HepG2 (cell line): ENCODE measurements at regions of chr11 and their contacts with region 1.

Region 1: DNA sequence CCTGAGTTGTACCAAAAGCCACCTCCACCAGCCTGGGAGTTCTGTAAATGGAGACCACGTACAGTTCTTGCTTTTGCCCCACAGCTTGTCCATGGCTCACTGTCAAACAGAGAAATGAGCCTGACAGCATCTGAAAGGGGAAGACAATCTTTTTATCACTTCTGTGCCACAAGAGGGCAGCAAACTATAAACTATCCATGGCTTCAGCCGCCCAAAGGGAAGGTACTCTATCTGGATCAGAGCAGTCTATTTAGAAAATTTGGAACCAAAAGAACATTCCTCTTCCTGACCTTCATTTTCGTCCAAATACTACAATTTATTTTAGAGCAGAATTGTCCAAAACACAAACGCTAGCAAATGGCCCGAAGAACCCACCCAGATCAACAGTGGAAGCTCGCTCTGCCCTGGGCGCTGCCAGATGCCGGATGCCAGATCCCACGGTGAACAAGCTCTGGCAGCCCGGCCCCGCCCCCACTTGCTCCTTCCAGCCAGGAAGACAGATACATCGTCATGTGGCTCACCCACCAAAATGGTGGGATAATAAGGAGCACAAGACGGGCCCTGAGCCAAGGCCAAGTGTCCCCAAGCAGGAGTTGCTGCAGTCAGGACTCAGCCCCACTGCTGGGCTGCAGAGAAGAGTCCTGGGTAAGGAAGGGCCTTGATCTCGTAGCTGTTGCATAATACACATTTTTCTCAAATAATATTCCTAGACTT is 23.9 kb upstream of the SCGB1A1 start:
- DNase-seq: peak; percentile 71
- ATAC-seq: peak; percentile 67
- H3K4me3 ChIP-seq: no peak overlapping the region
- H3K27ac ChIP-seq: no peak overlapping the region
- H3K4me1 ChIP-seq: peaks cover 27% of the 10 kb centered on the region
- H3K27me3 ChIP-seq: peaks cover 0 to 10% of the 10 kb centered on the region in 2 experiments; a peak in 1 of 5 replicates
- CTCF ChIP-seq: peak; percentile 85
- EP300 ChIP-seq: no peak
- POLR2A ChIP-seq: no peak
- RAD21 ChIP-seq: peak; percentile 66

Region 2: GRCh38 chr11:62383822-62384221 is 11.2 kb before region 1 on chr11:
- CTCF ChIA-PET with region 1: interaction called, 25 read pairs
- POLR2A ChIA-PET with region 1: no interaction called
- in situ Hi-C with region 1: no loop called
- intact Hi-C with region 1: loop called (anchors 1 kb)
- DNase-seq: no peak
- ATAC-seq: no peak
- H3K4me3 ChIP-seq: no peak overlapping the region
- H3K27ac ChIP-seq: no peak overlapping the region
- H3K4me1 ChIP-seq: peaks cover 25% of the 10 kb centered on the region
- H3K27me3 ChIP-seq: no peaks in the 10 kb centered on the region
- CTCF ChIP-seq: no peak
- EP300 ChIP-seq: no peak
- POLR2A ChIP-seq: no peak
- RAD21 ChIP-seq: no peak

Region 3: GRCh38 chr11:62427630-62428233 is 32.8 kb after region 1 on chr11:
- CTCF ChIA-PET with region 1: interaction called, 3 read pairs
- POLR2A ChIA-PET with region 1: no interaction called
- in situ Hi-C with region 1: no loop called
- intact Hi-C with region 1: loop called (anchors 1 kb)
- DNase-seq: no peak
- ATAC-seq: no peak
- H3K4me3 ChIP-seq: no peak overlapping the region
- H3K27ac ChIP-seq: peak overlapping the region; percentile 30
- H3K4me1 ChIP-seq: peaks cover 81% of the 10 kb centered on the region
- H3K27me3 ChIP-seq: no peaks in the 10 kb centered on the region
- CTCF ChIP-seq: no peak
- EP300 ChIP-seq: no peak
- POLR2A ChIP-seq: no peak
- RAD21 ChIP-seq: no peak

Region 4: GRCh38 chr11:62461740-62462507 is 66.9 kb after region 1 on chr11:
- CTCF ChIA-PET with region 1: no interaction called
- POLR2A ChIA-PET with region 1: no interaction called
- in situ Hi-C with region 1: no loop called
- intact Hi-C with region 1: no loop called
- DNase-seq: no peak
- ATAC-seq: no peak
- H3K4me3 ChIP-seq: no peak overlapping the region
- H3K27ac ChIP-seq: no peak overlapping the region
- H3K4me1 ChIP-seq: peaks cover 65% of the 10 kb centered on the region
- H3K27me3 ChIP-seq: no peaks in the 10 kb centered on the region
- CTCF ChIP-seq: no peak
- EP300 ChIP-seq: no peak
- POLR2A ChIP-seq: no peak
- RAD21 ChIP-seq: no peak

Region 5: GRCh38 chr11:62556108-62556871 is 161.3 kb after region 1 on chr11:
- CTCF ChIA-PET with region 1: interaction called, 19 read pairs
- POLR2A ChIA-PET with region 1: no interaction called
- in situ Hi-C with region 1: loop called (anchors 5 kb)
- intact Hi-C with region 1: loop called (anchors 2 kb)
- DNase-seq: no peak
- ATAC-seq: peak; percentile 1
- H3K4me3 ChIP-seq: no peak overlapping the region
- H3K27ac ChIP-seq: peak overlapping the region; percentile 44
- H3K4me1 ChIP-seq: peaks cover 85% of the 10 kb centered on the region
- H3K27me3 ChIP-seq: no peaks in the 10 kb centered on the region
- CTCF ChIP-seq: no peak
- EP300 ChIP-seq: no peak
- POLR2A ChIP-seq: no peak
- RAD21 ChIP-seq: no peak

Region 6: DNA sequence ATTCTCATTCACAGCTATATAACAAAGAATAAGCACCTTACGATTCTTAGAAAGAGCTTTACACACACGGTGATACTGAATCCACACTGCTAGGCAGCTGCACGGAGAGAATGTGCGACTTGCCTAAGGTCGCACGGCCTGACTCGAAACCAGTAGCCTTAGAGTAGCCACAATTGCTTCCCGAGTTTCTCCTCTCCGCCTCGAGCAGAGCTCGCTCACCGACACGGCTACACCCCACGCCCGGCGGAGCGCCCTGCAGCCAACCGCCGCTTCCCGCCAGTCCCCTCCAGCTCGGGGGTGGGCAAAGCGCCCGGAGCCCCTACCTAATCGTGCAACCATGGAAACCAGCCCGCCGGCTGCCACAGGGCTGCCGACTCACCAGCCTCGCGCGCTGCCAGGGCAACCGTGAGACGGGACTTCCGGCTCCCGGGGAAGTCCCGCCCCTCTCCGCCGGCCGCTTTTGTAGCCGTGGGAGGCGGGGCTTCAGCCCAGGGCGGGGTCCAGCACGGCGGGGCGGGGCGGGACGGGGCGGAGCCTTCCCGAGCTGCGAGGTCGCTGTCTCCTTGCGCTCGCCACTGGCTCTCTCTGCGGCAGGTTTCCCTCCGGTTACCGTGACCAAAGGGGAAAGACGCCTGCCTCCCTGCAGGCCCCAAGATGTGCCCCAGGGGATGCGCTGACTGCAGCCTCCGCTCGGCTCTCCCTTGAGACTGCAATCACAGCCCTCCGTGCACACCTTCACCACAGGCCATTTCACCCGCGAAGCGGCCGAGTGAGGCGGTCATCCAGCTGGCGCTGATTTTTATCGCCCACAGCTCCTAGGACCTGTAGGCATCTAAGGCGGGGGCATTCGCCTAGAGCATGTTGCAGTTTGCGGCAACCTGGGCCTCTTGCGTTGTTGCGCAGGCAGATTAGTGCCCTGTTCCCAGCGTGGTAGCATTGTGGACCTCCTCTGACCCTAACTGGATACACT is 311.2 kb after region 1 on chr11:
- CTCF ChIA-PET with region 1: no interaction called
- POLR2A ChIA-PET with region 1: no interaction called
- in situ Hi-C with region 1: loop called (anchors 10 kb)
- intact Hi-C with region 1: no loop called
- DNase-seq: peak; percentile 83
- ATAC-seq: peak; percentile 93
- H3K4me3 ChIP-seq: peak overlapping the region; percentile 70 to 86 (median 80)
- H3K27ac ChIP-seq: peak overlapping the region; percentile 69
- H3K4me1 ChIP-seq: peaks cover 18% of the 10 kb centered on the region
- H3K27me3 ChIP-seq: no peaks in the 10 kb centered on the region
- CTCF ChIP-seq: no peak
- EP300 ChIP-seq: no peak
- POLR2A ChIP-seq: peak in 1 of 2 experiments; percentile 74; a peak in 2 of 4 replicates
- RAD21 ChIP-seq: no peak